Heart left ventricle (tissue), 16 donors: ENCODE measurements at regions of chr4 and their contacts with region 1.

Region 1: GRCh38 chr4:159298502-159298901 is 195.6 kb downstream of the RAPGEF2 start:
- DNase-seq: no peak
- ATAC-seq: peak in 3 of 4 donors; percentile 38 to 61 (median 55)
- H3K4me3 ChIP-seq: no peak overlapping the region
- H3K27ac ChIP-seq: peak overlapping the region in 3 of 12 donors; percentile 13 to 34 (median 18)
- H3K4me1 ChIP-seq: peaks cover 0 to 53% (median 25%) of the 10 kb centered on the region in 12 donors
- H3K27me3 ChIP-seq: no peaks in the 10 kb centered on the region
- CTCF ChIP-seq: no peak
- POLR2A ChIP-seq: no peak

Region 2: DNA sequence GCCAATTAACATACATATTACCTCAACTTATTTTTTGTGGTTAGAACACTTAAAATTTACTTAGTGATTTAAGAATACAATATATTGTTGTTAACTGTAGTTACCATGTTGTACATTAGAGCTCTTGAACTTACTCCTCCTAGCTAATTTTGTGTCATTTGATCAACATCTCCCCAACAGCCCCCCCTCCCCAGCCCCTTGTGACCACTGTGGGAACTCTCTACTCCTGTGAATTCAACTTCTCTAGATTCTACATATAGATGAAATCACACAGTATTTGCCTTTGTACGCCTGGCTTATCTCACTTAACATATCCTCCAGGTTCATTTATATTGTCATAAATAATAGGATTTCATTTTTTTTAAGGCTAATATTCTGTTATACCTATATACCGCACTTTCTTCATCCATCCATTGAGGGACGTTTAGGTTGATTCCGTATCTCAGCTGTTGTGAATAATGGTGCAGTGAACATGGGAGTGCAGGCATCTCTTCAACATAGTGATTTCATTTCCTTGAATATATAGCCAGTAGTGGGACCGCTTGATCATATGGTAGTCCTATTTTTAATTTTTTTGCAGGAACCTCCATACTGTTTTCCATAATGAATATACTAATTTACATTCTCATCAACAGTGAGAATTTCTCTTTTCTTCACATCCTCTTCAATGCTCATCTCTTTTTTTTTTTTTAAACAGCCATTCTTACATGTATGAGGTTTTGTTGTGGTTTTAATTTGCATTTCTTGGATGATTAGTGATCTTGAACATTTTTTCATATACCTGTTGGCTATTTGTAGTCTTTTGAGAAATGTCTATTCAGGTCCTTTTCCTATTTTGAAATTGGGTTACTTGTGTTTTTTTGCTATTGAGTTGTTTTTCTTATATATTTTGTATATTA is 128.8 kb before region 1 on chr4:
- intact Hi-C with region 1: no loop called
- DNase-seq: no peak
- ATAC-seq: no peak
- H3K4me3 ChIP-seq: no peak overlapping the region
- H3K27ac ChIP-seq: no peak overlapping the region
- H3K4me1 ChIP-seq: peaks cover 0 to 82% (median 53%) of the 10 kb centered on the region in 12 donors
- H3K27me3 ChIP-seq: no peaks in the 10 kb centered on the region
- CTCF ChIP-seq: no peak
- POLR2A ChIP-seq: no peak

Region 3: GRCh38 chr4:159248384-159249178 is 49.9 kb before region 1 on chr4:
- intact Hi-C with region 1: loop called in 1 of 10 experiments (anchors 5 kb)
- DNase-seq: peak in 1 of 5 donors; percentile 23
- ATAC-seq: peak; percentile 82 to 91 (median 84)
- H3K4me3 ChIP-seq: peak overlapping the region in 10 of 12 donors; percentile 7 to 47 (median 40)
- H3K27ac ChIP-seq: peak overlapping the region; percentile 8 to 79 (median 62)
- H3K4me1 ChIP-seq: peaks cover 0 to 47% (median 28%) of the 10 kb centered on the region in 12 donors
- H3K27me3 ChIP-seq: no peaks in the 10 kb centered on the region
- CTCF ChIP-seq: no peak
- POLR2A ChIP-seq: no peak